Naive thymus-derived CD4-positive, alpha-beta T cell (primary cell): ENCODE measurements at regions of chr13 and their contacts with region 1.

Region 1: GRCh38 chr13:73677048-73677601 is 457.1 kb downstream of the KLF12 start:
- DNase-seq: no peak
- ATAC-seq: no peak
- H3K4me3 ChIP-seq: no peak overlapping the region
- H3K4me3 Mint-ChIP-seq: no peak overlapping the region
- H3K27ac ChIP-seq: no peak overlapping the region
- H3K27ac Mint-ChIP-seq: no peak overlapping the region
- H3K4me1 ChIP-seq: no peaks in the 10 kb centered on the region
- H3K4me1 Mint-ChIP-seq: no peaks in the 10 kb centered on the region
- H3K27me3 ChIP-seq: no peaks in the 10 kb centered on the region
- H3K27me3 Mint-ChIP-seq: no peaks in the 10 kb centered on the region

Region 2: GRCh38 chr13:73325711-73326558 is 351.2 kb before region 1 on chr13:
- CTCF ChIA-PET with region 1: no interaction called
- POLR2A ChIA-PET with region 1: no interaction called
- intact Hi-C with region 1: no loop called
- DNase-seq: no peak
- ATAC-seq: no peak
- H3K4me3 ChIP-seq: no peak overlapping the region
- H3K4me3 Mint-ChIP-seq: no peak overlapping the region
- H3K27ac ChIP-seq: no peak overlapping the region
- H3K27ac Mint-ChIP-seq: no peak overlapping the region
- H3K4me1 ChIP-seq: no peaks in the 10 kb centered on the region
- H3K4me1 Mint-ChIP-seq: no peaks in the 10 kb centered on the region
- H3K27me3 ChIP-seq: no peaks in the 10 kb centered on the region
- H3K27me3 Mint-ChIP-seq: peaks cover 0 to 30% (median 3%) of the 10 kb centered on the region in 5 donors

Region 3: DNA sequence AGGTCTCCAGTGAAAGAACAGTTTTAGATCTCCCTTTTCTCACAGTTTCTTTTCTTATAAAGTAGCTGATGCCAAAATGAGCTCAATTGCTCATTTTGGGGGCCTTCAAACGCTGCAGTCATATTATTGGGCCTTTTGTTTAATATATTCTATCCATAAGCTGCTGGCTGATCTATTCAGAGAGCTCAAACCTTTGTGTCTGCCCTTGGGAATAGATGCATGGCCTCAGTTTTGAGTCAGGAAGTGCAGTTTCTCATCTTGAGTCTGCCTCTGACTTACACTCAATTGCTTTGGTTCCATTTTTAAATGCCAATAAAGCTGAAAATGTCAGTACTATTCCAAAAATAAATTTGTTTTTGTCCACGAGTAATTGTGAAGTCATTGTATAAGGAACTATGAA is 11.9 kb before region 1 on chr13:
- CTCF ChIA-PET with region 1: no interaction called
- POLR2A ChIA-PET with region 1: interaction called, 3 read pairs
- intact Hi-C with region 1: loop called in 1 of 2 experiments (anchors 2 kb)
- DNase-seq: no peak
- ATAC-seq: no peak
- H3K4me3 ChIP-seq: no peak overlapping the region
- H3K4me3 Mint-ChIP-seq: no peak overlapping the region
- H3K27ac ChIP-seq: no peak overlapping the region
- H3K27ac Mint-ChIP-seq: no peak overlapping the region
- H3K4me1 ChIP-seq: no peaks in the 10 kb centered on the region
- H3K4me1 Mint-ChIP-seq: peaks cover 0 to 5% (median 4%) of the 10 kb centered on the region in 7 donors
- H3K27me3 ChIP-seq: no peaks in the 10 kb centered on the region
- H3K27me3 Mint-ChIP-seq: peaks cover 0 to 15% (median 0%) of the 10 kb centered on the region in 5 donors

Region 4: GRCh38 chr13:73938375-73939070 is 261.4 kb after region 1 on chr13:
- CTCF ChIA-PET with region 1: no interaction called
- POLR2A ChIA-PET with region 1: no interaction called
- intact Hi-C with region 1: no loop called
- DNase-seq: no peak
- ATAC-seq: no peak
- H3K4me3 ChIP-seq: no peak overlapping the region
- H3K4me3 Mint-ChIP-seq: no peak overlapping the region
- H3K27ac ChIP-seq: no peak overlapping the region
- H3K27ac Mint-ChIP-seq: peak overlapping the region in 3 of 9 donors; percentile 29 to 57 (median 33)
- H3K4me1 ChIP-seq: peaks cover 22 to 38% of the 10 kb centered on the region in 2 donors
- H3K4me1 Mint-ChIP-seq: peaks cover 40 to 94% (median 83%) of the 10 kb centered on the region in 7 donors
- H3K27me3 ChIP-seq: no peaks in the 10 kb centered on the region
- H3K27me3 Mint-ChIP-seq: no peaks in the 10 kb centered on the region